ENCODE measurements at regions of chr7 and their contacts with region 1.

Region 1: GRCh38 chr7:148962823-148963582 is 65.3 kb downstream of the PDIA4 start:
- DNase-seq: peak; percentile 88
- ATAC-seq: peak; percentile 66
- H3K4me3 ChIP-seq: peak overlapping the region; percentile 73 to 75
- H3K27ac ChIP-seq: peak overlapping the region; percentile 87
- H3K4me1 ChIP-seq: peaks cover 10% of the 10 kb centered on the region
- H3K27me3 ChIP-seq: no peaks in the 10 kb centered on the region
- CTCF ChIP-seq: peak; percentile 93

Region 2: DNA sequence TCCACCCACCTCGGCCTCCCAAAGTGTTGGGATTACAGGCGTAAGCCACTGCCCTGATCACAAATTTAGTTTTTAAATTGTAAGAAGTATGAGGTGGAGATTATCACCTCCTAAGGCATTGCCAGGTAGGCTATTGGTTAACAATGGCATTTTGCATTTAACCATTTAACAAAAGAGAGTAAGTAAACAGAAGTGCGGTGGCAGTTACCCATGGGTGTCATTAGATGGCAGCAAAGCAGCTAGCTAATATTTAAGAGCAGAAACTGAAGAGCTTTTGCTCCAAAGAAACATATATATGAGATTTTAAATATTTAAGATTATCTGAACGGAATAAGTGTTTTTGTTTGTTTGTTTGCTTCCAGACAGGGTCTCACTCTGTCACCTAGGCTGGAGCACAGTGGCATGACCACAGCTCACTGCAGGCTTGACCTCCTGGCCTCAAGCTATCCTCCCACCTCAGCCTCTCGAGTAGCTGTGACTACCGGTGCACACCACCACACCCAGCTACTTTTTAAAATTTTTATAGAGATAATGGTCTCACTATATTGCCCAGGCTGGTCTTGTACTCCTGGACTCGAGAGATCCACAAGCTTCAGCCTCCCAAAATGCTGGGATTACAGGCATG is 698.0 kb before region 1 on chr7:
- CTCF ChIA-PET with region 1: no interaction called
- POLR2A ChIA-PET with region 1: no interaction called
- in situ Hi-C with region 1: no loop called
- intact Hi-C with region 1: loop called (anchors 5 kb)
- DNase-seq: peak; percentile 25
- ATAC-seq: 0 out of 2 replicates have a peak, but pooled peaks have one; percentile 58
- H3K4me3 ChIP-seq: no peak overlapping the region
- H3K27ac ChIP-seq: no peak overlapping the region
- H3K4me1 ChIP-seq: no peaks in the 10 kb centered on the region; the same call in 1 of the 2 replicates
- H3K27me3 ChIP-seq: 0 out of 2 replicates have a peak, but pooled peaks cover 2% of the 10 kb centered on the region
- CTCF ChIP-seq: peak; percentile 85

Region 3: DNA sequence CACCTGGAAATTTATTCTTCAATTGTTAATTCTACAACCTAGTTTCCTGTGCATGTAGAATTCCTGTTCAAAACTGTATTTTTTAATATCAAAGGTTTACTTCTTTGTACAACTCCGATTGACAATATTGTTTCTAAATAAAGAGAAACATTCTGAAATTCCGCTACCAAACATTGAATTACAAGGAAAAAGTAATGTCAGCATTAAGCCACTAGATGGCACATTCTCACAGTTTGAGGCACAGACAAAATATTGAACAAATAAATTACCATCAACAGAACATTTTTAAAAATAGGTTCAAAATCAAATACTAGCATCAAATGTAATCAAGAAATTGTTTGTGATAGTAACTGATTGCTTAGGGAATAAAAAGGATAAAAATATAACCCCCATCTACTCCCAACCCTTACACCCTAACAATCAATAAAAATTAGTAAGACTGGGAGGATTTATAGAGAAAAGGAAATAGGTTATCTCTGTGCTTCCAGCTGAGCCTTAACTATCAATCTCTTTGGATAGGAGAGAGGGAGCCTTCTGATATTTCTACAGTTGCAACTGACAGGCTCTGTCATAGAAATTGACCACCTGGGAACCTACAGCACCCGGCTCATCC is 459.0 kb before region 1 on chr7:
- CTCF ChIA-PET with region 1: no interaction called
- POLR2A ChIA-PET with region 1: no interaction called
- in situ Hi-C with region 1: no loop called
- intact Hi-C with region 1: loop called (anchors 2 kb)
- DNase-seq: peak; percentile 18
- ATAC-seq: no peak
- H3K4me3 ChIP-seq: no peak overlapping the region
- H3K27ac ChIP-seq: no peak overlapping the region
- H3K4me1 ChIP-seq: no peaks in the 10 kb centered on the region; the same call in 1 of the 2 replicates
- H3K27me3 ChIP-seq: peaks cover 16% of the 10 kb centered on the region
- CTCF ChIP-seq: peak; percentile 74; the same call in 1 of the 2 replicates

Region 4: GRCh38 chr7:148575640-148576411 is 387.2 kb before region 1 on chr7:
- CTCF ChIA-PET with region 1: interaction called, 5 read pairs
- POLR2A ChIA-PET with region 1: no interaction called
- in situ Hi-C with region 1: no loop called
- intact Hi-C with region 1: loop called (anchors 1 kb)
- DNase-seq: peak; percentile 50
- ATAC-seq: peak; percentile 95
- H3K4me3 ChIP-seq: no peak overlapping the region
- H3K27ac ChIP-seq: no peak overlapping the region
- H3K4me1 ChIP-seq: no peaks in the 10 kb centered on the region
- H3K27me3 ChIP-seq: no peaks in the 10 kb centered on the region
- CTCF ChIP-seq: peak; percentile 94

Region 5: DNA sequence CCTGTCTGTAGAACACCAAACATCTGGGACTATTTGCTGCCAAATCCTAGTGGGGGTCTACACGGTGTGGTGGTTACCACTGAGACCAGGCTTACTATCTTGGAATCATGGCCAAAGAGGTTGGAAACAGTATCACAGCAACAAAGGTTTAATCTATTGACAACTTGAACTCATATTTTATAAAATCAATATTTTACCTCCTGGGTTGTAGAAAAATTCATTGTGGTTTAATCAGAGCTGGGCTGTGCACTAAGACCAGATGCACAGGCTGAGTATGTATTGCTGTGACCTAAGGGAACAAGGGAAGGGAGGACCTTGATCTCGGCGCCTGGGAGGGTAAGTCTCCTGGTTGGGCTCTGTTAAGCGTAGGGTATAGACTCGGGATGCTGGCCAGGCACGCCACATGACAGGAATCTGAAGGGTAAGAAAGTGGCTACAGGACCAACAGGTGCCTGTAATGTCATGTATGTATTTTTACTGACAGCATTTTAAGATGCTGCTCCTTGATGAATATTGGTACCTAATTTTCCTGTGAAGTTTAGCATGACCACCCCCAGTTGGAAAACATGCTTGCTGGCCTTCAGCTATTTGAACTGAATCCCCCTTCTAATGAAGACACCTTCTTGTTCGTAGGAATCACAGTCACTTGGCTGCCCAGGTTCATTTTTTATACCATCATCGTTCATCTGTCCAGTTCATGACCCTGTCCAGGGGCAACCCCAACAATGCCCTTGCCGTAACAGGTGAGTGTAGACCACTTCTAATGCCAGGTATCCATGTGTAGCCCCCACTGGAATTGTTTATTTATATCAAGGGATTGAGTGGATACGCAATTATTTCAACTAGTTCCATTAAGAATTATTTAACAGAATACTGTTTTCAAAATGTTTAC is 158.4 kb before region 1 on chr7:
- CTCF ChIA-PET with region 1: interaction called, 10 read pairs
- POLR2A ChIA-PET with region 1: interaction called, 6 read pairs
- in situ Hi-C with region 1: no loop called
- intact Hi-C with region 1: no loop called
- DNase-seq: no peak
- ATAC-seq: no peak; the same call in 1 of the 2 replicates
- H3K4me3 ChIP-seq: no peak overlapping the region
- H3K27ac ChIP-seq: no peak overlapping the region
- H3K4me1 ChIP-seq: no peaks in the 10 kb centered on the region
- H3K27me3 ChIP-seq: no peaks in the 10 kb centered on the region
- CTCF ChIP-seq: no peak

Region 6: DNA sequence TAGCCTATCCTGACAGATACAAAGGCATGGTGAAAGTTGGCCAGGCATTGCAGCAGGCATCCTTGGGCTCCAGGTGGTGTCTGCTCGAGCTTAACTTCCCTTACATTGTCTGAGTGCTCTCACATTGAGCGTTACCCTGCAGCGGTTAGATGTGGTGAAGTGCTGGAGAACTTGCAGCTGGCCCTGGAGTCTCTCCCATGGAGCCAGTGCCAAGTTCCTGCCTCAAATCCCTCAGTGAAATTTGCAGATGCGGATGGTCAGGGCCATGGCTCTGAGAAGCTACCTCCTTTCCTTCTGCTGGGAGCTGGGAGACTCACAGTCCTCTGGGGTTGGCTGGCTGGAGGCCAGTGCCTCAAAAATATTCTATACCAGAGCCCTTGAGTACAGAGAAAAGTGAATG is 537.9 kb after region 1 on chr7:
- CTCF ChIA-PET with region 1: interaction called, 12 read pairs
- POLR2A ChIA-PET with region 1: no interaction called
- in situ Hi-C with region 1: no loop called
- intact Hi-C with region 1: no loop called
- DNase-seq: no peak
- ATAC-seq: no peak
- H3K4me3 ChIP-seq: no peak overlapping the region
- H3K27ac ChIP-seq: no peak overlapping the region
- H3K4me1 ChIP-seq: no peaks in the 10 kb centered on the region
- H3K27me3 ChIP-seq: no peaks in the 10 kb centered on the region
- CTCF ChIP-seq: no peak

Measured in Panc1 (cell line).